H1 (cell line): ENCODE measurements at regions of chr1 and their contacts with region 1.

Region 1: GRCh38 chr1:226649780-226650179 is 89.3 kb downstream of the ITPKB start:
- DNase-seq: no peak
- H3K4me3 ChIP-seq: no peak overlapping the region
- H3K27ac ChIP-seq: no peak overlapping the region
- H3K4me1 ChIP-seq: peaks cover 4 to 18% (median 13%) of the 10 kb centered on the region in 4 experiments
- H3K27me3 ChIP-seq: no peaks in the 10 kb centered on the region; a peak in 1 of 7 replicates
- CTCF ChIP-seq: peak in 2 of 3 experiments; percentile 44 to 57; a peak in 3 of 4 replicates
- EP300 ChIP-seq: no peak
- POLR2A ChIP-seq: no peak
- RAD21 ChIP-seq: peak; percentile 62 to 70

Region 2: DNA sequence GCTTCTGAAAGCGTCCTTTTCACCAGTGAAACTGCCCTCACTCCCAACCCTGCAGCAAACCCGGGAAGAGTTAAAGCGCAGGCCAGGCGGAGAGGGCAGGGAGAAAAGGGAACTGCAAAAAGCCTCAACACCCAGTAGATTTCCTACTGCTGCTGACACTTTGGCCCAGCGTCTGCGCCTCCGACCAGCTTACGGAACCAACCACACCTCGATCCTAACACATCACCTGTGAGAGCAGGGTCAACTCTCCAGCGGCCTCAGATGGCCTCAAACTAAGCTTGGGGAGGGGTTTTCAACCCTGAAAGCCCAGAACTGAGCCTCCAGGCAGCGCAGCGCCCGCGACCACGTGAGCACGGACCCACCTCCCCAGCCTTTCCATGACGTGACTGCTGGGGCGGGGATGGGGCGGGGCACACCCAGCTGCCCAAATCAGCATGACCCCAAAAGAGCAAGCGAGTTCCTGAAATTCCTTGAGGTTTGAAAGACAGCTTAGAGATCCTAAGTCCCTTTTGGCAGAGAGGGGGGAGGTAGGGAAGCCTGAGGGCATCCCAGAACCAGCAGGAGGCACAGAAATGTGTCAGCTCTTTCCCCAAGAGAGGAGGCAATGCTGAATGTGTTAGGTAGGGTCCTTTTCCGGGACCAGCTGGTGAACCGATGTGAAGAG is 30.2 kb after region 1 on chr1:
- CTCF ChIA-PET with region 1: interaction called, 10 read pairs
- POLR2A ChIA-PET with region 1: interaction called, 4 read pairs
- DNase-seq: peak; percentile 84 to 97
- H3K4me3 ChIP-seq: peak overlapping the region; percentile 2 to 51 (median 32); a peak in 6 of 8 replicates
- H3K27ac ChIP-seq: peak overlapping the region; percentile 57; the same call in 1 of the 2 replicates
- H3K4me1 ChIP-seq: peaks cover 6 to 19% (median 13%) of the 10 kb centered on the region in 4 experiments; a peak in 6 of 7 replicates
- H3K27me3 ChIP-seq: peaks cover 0 to 29% (median 7%) of the 10 kb centered on the region in 4 experiments; a peak in 4 of 7 replicates
- CTCF ChIP-seq: no peak
- EP300 ChIP-seq: peak in 1 of 2 experiments; percentile 92; a peak in 2 of 3 replicates
- POLR2A ChIP-seq: peak in 1 of 2 experiments; percentile 70; a peak in 2 of 3 replicates
- RAD21 ChIP-seq: no peak; a peak in 1 of 4 replicates

Region 3: DNA sequence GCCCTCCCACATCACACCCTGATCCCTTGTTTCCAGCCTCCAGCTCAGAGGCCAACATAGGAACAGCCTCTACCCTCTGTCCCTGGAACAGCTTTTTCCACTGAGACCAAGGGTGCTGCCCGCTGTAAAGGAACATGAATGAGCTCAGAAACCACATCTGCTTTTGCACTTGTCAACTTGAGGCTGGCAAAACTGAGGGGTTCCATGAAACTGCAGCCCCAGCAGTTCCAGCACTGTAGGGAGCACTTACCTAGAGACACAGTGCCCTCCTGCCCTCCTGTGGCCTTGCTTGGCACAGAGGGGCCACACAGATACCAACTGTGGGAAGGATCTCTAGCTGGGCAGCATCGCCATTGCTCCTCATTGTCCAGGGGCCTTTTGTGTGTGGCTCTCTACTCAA is 37.6 kb after region 1 on chr1:
- CTCF ChIA-PET with region 1: interaction called, 14 read pairs
- POLR2A ChIA-PET with region 1: interaction called, 5 read pairs
- DNase-seq: no peak
- H3K4me3 ChIP-seq: no peak overlapping the region
- H3K27ac ChIP-seq: no peak overlapping the region
- H3K4me1 ChIP-seq: peaks cover 2 to 9% (median 5%) of the 10 kb centered on the region in 4 experiments
- H3K27me3 ChIP-seq: peaks cover 0 to 10% (median 0%) of the 10 kb centered on the region in 4 experiments; a peak in 2 of 7 replicates
- CTCF ChIP-seq: peak in 1 of 3 experiments; percentile 24; a peak in 1 of 4 replicates
- EP300 ChIP-seq: no peak
- POLR2A ChIP-seq: no peak
- RAD21 ChIP-seq: peak; percentile 15 to 46; a peak in 3 of 4 replicates

Region 4: DNA sequence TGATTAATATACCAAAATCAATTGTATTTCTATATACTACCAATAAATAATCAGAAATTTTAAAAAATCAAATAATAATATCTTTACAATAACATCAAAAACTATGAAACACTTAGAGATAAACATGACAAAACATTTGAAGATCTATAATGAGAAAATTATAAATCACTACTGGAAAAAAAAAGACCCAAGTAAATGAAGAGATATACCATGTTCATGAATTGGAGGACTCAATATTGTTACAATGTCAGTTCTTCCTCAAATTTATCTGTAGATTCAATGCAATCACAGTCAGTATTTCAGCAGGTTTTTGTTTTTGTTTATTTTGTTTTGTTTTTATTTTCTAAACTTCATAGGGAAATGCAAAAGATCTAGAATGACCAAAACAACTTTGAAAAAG is 93.5 kb after region 1 on chr1:
- CTCF ChIA-PET with region 1: no interaction called
- POLR2A ChIA-PET with region 1: no interaction called
- DNase-seq: no peak
- H3K4me3 ChIP-seq: no peak overlapping the region
- H3K27ac ChIP-seq: no peak overlapping the region
- H3K4me1 ChIP-seq: peaks cover 0 to 5% (median under 1%) of the 10 kb centered on the region in 4 experiments; a peak in 4 of 7 replicates
- H3K27me3 ChIP-seq: peaks cover 0 to 29% (median 20%) of the 10 kb centered on the region in 4 experiments; a peak in 6 of 7 replicates
- CTCF ChIP-seq: no peak
- EP300 ChIP-seq: no peak
- POLR2A ChIP-seq: no peak
- RAD21 ChIP-seq: no peak